Endothelial cell of umbilical vein (primary cell): ENCODE measurements at regions of chr1 and their contacts with region 1.

Region 1: GRCh38 chr1:44924835-44925513 is 61.4 kb downstream of the EIF2B3 start:
- DNase-seq: peak; percentile 93
- H3K4me3 ChIP-seq: peak overlapping the region in 2 of 3 experiments; percentile 11 to 61
- H3K27ac ChIP-seq: peak overlapping the region; percentile 87
- H3K4me1 ChIP-seq: peaks cover 18% of the 10 kb centered on the region
- H3K27me3 ChIP-seq: no peaks in the 10 kb centered on the region
- CTCF ChIP-seq: peak; percentile 32 to 54
- POLR2A ChIP-seq: no peak

Region 2: DNA sequence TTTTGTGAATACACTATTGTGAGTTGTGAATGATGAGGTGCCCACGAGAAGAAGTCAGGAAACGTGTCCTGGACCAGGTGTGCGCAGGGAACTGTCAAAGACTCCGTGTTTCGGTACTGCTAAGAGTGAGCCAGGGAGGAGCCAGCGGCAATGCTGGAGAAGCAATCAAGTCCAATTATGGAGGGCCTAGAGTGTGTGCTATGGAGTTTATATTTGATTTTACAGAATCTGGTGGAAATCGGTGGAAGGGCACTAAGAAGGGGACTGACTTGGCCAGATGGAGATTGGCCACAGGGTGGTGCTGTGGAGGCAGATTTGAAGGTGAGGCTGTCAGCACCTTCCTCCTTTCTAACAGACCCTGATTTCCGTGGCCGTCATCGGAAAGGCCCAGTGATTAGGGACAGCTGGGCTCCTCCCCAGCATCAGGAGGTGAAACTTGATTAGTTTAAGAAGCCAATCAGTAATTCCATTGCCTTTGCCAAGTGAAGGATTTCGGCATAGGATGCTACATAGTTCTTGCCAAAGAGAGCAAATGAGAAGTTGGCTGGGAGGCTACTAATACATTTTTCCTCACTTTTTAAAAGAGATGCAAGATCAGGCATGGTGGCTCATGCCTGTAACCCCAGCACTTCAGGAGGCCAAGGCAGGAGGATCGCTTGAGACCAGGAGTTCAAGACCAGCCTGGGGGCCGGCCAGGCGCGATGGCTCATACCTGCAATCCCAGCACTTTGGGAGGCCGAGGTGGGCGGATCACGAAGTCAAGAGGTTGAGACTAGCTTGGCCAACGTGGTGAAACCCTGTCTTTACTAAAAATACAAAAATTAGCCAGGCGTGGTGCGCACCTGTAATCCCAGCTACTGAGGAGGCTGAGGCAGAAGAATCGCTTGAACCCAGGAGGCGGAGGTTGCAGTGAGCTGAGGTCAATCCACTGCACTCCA is 89.0 kb before region 1 on chr1:
- CTCF ChIA-PET with region 1: interaction called, 10 read pairs
- POLR2A ChIA-PET with region 1: no interaction called
- dilution Hi-C with region 1: no loop called
- intact Hi-C with region 1: loop called (anchors 5 kb)
- DNase-seq: peak; percentile 88
- H3K4me3 ChIP-seq: no peak overlapping the region
- H3K27ac ChIP-seq: no peak overlapping the region
- H3K4me1 ChIP-seq: no peaks in the 10 kb centered on the region
- H3K27me3 ChIP-seq: no peaks in the 10 kb centered on the region
- CTCF ChIP-seq: peak; percentile 85 to 93
- POLR2A ChIP-seq: no peak

Region 3: GRCh38 chr1:44842862-44843655 is 81.9 kb before region 1 on chr1 and contains the start of gene PTCH2:
- CTCF ChIA-PET with region 1: interaction called, 7 read pairs
- POLR2A ChIA-PET with region 1: no interaction called
- dilution Hi-C with region 1: no loop called
- intact Hi-C with region 1: loop called (anchors 5 kb)
- DNase-seq: peak; percentile 68
- H3K4me3 ChIP-seq: peak within 1 kb of the TSS; percentile 30 to 53 (median 48)
- H3K27ac ChIP-seq: no peak within 1 kb of the TSS
- H3K4me1 ChIP-seq: no peaks in the 10 kb centered on the region
- H3K27me3 ChIP-seq: no peaks in the 10 kb centered on the region
- CTCF ChIP-seq: no peak
- POLR2A ChIP-seq: no peak
- total RNA-seq, gene PTCH2: 1.8 and 1.9 TPM in 2 replicates

Region 4: GRCh38 chr1:44855742-44856141 is 69.2 kb before region 1 on chr1:
- CTCF ChIA-PET with region 1: no interaction called
- POLR2A ChIA-PET with region 1: no interaction called
- dilution Hi-C with region 1: no loop called
- intact Hi-C with region 1: no loop called
- DNase-seq: no peak
- H3K4me3 ChIP-seq: no peak overlapping the region
- H3K27ac ChIP-seq: no peak overlapping the region
- H3K4me1 ChIP-seq: no peaks in the 10 kb centered on the region
- H3K27me3 ChIP-seq: no peaks in the 10 kb centered on the region
- CTCF ChIP-seq: no peak
- POLR2A ChIP-seq: no peak

Region 5: GRCh38 chr1:44941424-44942324 is 16.7 kb after region 1 on chr1:
- CTCF ChIA-PET with region 1: interaction called, 14 read pairs
- POLR2A ChIA-PET with region 1: no interaction called
- dilution Hi-C with region 1: no loop called
- intact Hi-C with region 1: no loop called
- DNase-seq: peak; percentile 59
- H3K4me3 ChIP-seq: no peak overlapping the region
- H3K27ac ChIP-seq: peak overlapping the region; percentile 60
- H3K4me1 ChIP-seq: peaks cover 12% of the 10 kb centered on the region
- H3K27me3 ChIP-seq: no peaks in the 10 kb centered on the region
- CTCF ChIP-seq: no peak
- POLR2A ChIP-seq: no peak

Region 6: DNA sequence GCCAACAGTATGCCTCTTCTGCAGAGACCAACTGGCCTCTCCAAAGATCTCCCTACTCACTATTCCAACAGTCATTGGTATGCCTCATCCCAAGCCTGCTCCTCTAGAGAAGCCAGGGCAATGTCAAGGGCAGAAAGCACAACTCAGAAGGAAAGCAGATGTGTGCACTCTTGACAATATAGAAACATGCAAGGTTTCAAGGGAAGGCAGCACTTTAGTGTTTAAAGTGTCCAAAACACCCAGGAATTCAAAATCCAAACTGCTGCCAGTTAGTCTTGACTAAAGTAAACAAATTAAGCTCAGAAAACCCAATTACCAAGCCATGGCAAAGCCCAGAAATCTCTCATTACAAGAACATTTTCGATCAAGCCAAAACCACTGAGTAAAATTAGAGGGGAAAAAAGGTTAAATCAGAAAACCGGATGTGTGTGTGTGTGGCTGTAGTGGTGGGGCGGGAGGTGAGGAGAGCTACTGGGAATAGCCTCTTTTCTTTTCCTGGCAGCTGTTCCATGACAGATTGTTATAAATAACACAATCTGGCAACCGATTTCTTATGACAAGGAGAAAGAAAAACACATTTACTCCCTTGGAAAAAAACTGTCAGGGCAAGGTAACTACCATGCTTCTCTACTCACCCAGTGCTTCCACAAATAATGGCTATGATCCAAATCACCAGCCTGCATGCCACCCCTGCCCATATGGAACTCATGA is 22.2 kb after region 1 on chr1:
- CTCF ChIA-PET with region 1: interaction called, 14 read pairs
- POLR2A ChIA-PET with region 1: interaction called, 3 read pairs
- dilution Hi-C with region 1: no loop called
- intact Hi-C with region 1: loop called (anchors 1 kb)
- DNase-seq: peak; percentile 92
- H3K4me3 ChIP-seq: no peak overlapping the region
- H3K27ac ChIP-seq: peak overlapping the region; percentile 48
- H3K4me1 ChIP-seq: peaks cover 20% of the 10 kb centered on the region
- H3K27me3 ChIP-seq: no peaks in the 10 kb centered on the region
- CTCF ChIP-seq: no peak
- POLR2A ChIP-seq: no peak

Region 7: GRCh38 chr1:44970317-44970716 is 45.3 kb after region 1 on chr1:
- CTCF ChIA-PET with region 1: interaction called, 13 read pairs
- POLR2A ChIA-PET with region 1: no interaction called
- dilution Hi-C with region 1: no loop called
- intact Hi-C with region 1: loop called (anchors 1 kb)
- DNase-seq: peak; percentile 80
- H3K4me3 ChIP-seq: no peak overlapping the region
- H3K27ac ChIP-seq: peak overlapping the region; percentile 56
- H3K4me1 ChIP-seq: peaks cover 35% of the 10 kb centered on the region
- H3K27me3 ChIP-seq: no peaks in the 10 kb centered on the region
- CTCF ChIP-seq: no peak
- POLR2A ChIP-seq: no peak

Region 8: GRCh38 chr1:44985747-44986359 is 60.9 kb after region 1 on chr1:
- CTCF ChIA-PET with region 1: interaction called, 15 read pairs
- POLR2A ChIA-PET with region 1: interaction called, 4 read pairs
- dilution Hi-C with region 1: no loop called
- intact Hi-C with region 1: loop called (anchors 1 kb)
- DNase-seq: peak; percentile 23
- H3K4me3 ChIP-seq: peak overlapping the region; percentile 42 to 89 (median 67)
- H3K27ac ChIP-seq: peak overlapping the region; percentile 4
- H3K4me1 ChIP-seq: peaks cover 8% of the 10 kb centered on the region
- H3K27me3 ChIP-seq: no peaks in the 10 kb centered on the region
- CTCF ChIP-seq: no peak
- POLR2A ChIP-seq: no peak